Activated CD4-positive, alpha-beta memory T cell treated with anti-CD3 and anti-CD28 coated beads, Interleukin-2, amount 10 ng/mL, durations not matched to agents 7 days and 5 days (primary cell): ENCODE measurements at regions of chr1 and their contacts with region 1.

Region 1: GRCh38 chr1:21216835-21217811 is 40.4 kb upstream of the EIF4G3 start:
- DNase-seq: peak; percentile 73
- H3K4me3 Mint-ChIP-seq: no peak overlapping the region
- H3K27ac Mint-ChIP-seq: no peak overlapping the region
- H3K4me1 Mint-ChIP-seq: no peaks in the 10 kb centered on the region
- H3K27me3 Mint-ChIP-seq: no peaks in the 10 kb centered on the region

Region 2: GRCh38 chr1:21100481-21100921 is 116.6 kb before region 1 on chr1:
- CTCF ChIA-PET with region 1: no interaction called
- POLR2A ChIA-PET with region 1: no interaction called
- DNase-seq: no peak
- H3K4me3 Mint-ChIP-seq: no peak overlapping the region
- H3K27ac Mint-ChIP-seq: no peak overlapping the region
- H3K4me1 Mint-ChIP-seq: peaks cover 6% of the 10 kb centered on the region
- H3K27me3 Mint-ChIP-seq: no peaks in the 10 kb centered on the region

Region 3: GRCh38 chr1:21368515-21369289 is 151.6 kb after region 1 on chr1:
- CTCF ChIA-PET with region 1: interaction called, 35 read pairs
- POLR2A ChIA-PET with region 1: no interaction called
- DNase-seq: peak; percentile 60
- H3K4me3 Mint-ChIP-seq: no peak overlapping the region
- H3K27ac Mint-ChIP-seq: no peak overlapping the region
- H3K4me1 Mint-ChIP-seq: peaks cover 9% of the 10 kb centered on the region
- H3K27me3 Mint-ChIP-seq: no peaks in the 10 kb centered on the region